Activated CD4-positive, alpha-beta memory T cell treated with anti-CD3 and anti-CD28 coated beads, Interleukin-2, amount 10 ng/mL, durations not matched to agents 7 days and 5 days (primary cell): ENCODE measurements at regions of chr2 and their contacts with region 1.

Region 1: GRCh38 chr2:38665854-38666555 is at the start of gene GALM:
- DNase-seq: peak; percentile 74
- H3K4me3 Mint-ChIP-seq: peak within 1 kb of the TSS; percentile 98
- H3K27ac Mint-ChIP-seq: peak within 1 kb of the TSS; percentile 97
- H3K4me1 Mint-ChIP-seq: peaks cover 71% of the 10 kb centered on the region
- H3K27me3 Mint-ChIP-seq: no peaks in the 10 kb centered on the region
- total RNA-seq, gene GALM: 94.7 to 97.4 TPM

Region 2: GRCh38 chr2:38344813-38345212 is 321.2 kb before region 1 on chr2:
- CTCF ChIA-PET with region 1: no interaction called
- POLR2A ChIA-PET with region 1: no interaction called
- DNase-seq: no peak
- H3K4me3 Mint-ChIP-seq: no peak overlapping the region
- H3K27ac Mint-ChIP-seq: no peak overlapping the region
- H3K4me1 Mint-ChIP-seq: no peaks in the 10 kb centered on the region
- H3K27me3 Mint-ChIP-seq: no peaks in the 10 kb centered on the region

Region 3: GRCh38 chr2:38590053-38590452 is 76.0 kb before region 1 on chr2:
- CTCF ChIA-PET with region 1: no interaction called
- POLR2A ChIA-PET with region 1: interaction called, 646 read pairs
- DNase-seq: no peak
- H3K4me3 Mint-ChIP-seq: peak overlapping the region; percentile 36
- H3K27ac Mint-ChIP-seq: peak overlapping the region; percentile 62
- H3K4me1 Mint-ChIP-seq: peaks cover 78% of the 10 kb centered on the region
- H3K27me3 Mint-ChIP-seq: no peaks in the 10 kb centered on the region

Region 4: GRCh38 chr2:38626326-38627035 is 39.5 kb before region 1 on chr2:
- CTCF ChIA-PET with region 1: interaction called, 8 read pairs
- POLR2A ChIA-PET with region 1: interaction called, 42 read pairs
- DNase-seq: peak; percentile 72
- H3K4me3 Mint-ChIP-seq: peak overlapping the region; percentile 2
- H3K27ac Mint-ChIP-seq: peak overlapping the region; percentile 69
- H3K4me1 Mint-ChIP-seq: peaks cover 36% of the 10 kb centered on the region
- H3K27me3 Mint-ChIP-seq: no peaks in the 10 kb centered on the region

Region 5: GRCh38 chr2:38648107-38648761 is 17.8 kb before region 1 on chr2:
- CTCF ChIA-PET with region 1: interaction called, 39 read pairs
- POLR2A ChIA-PET with region 1: interaction called, 268 read pairs
- DNase-seq: no peak
- H3K4me3 Mint-ChIP-seq: peak overlapping the region; percentile 1
- H3K27ac Mint-ChIP-seq: peak overlapping the region; percentile 83
- H3K4me1 Mint-ChIP-seq: peaks cover 74% of the 10 kb centered on the region
- H3K27me3 Mint-ChIP-seq: no peaks in the 10 kb centered on the region

Region 6: DNA sequence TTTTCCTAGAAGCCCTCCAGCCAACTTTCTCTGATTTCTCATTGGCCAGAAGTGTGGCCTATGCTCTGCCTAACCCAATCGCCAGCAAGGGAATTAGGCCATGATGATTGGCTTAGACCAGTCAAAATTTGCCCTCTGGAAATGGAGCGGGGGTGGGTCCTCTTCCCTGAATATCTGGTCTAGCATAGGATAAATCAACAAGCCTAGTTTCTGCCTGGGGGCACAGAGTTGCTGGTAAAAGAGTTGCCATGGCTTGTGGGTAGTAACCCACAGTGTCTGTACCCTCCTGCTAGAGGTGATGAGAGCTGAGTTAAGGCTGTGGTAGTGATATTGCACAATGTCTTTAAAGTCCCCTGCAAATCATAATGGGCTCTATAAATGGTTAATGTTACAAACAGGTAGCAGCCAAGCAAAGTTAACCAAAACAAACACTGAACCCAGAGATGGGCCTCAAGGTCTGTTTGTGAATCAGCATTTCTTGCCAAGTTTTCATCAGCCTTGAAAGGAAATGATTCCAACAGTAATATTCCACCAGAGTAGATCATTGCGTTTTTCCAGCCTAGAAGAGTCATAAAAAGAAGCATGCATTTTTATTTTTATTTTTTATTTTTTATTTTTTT is 19.2 kb after region 1 on chr2:
- CTCF ChIA-PET with region 1: interaction called, 27 read pairs
- POLR2A ChIA-PET with region 1: interaction called, 92 read pairs
- DNase-seq: no peak
- H3K4me3 Mint-ChIP-seq: no peak overlapping the region
- H3K27ac Mint-ChIP-seq: peak overlapping the region; percentile 12
- H3K4me1 Mint-ChIP-seq: peaks cover 76% of the 10 kb centered on the region
- H3K27me3 Mint-ChIP-seq: no peaks in the 10 kb centered on the region

Region 7: GRCh38 chr2:38702413-38702812 is 36.4 kb after region 1 on chr2:
- CTCF ChIA-PET with region 1: interaction called, 5 read pairs
- POLR2A ChIA-PET with region 1: interaction called, 73 read pairs
- DNase-seq: no peak
- H3K4me3 Mint-ChIP-seq: peak overlapping the region; percentile 6
- H3K27ac Mint-ChIP-seq: peak overlapping the region; percentile 52
- H3K4me1 Mint-ChIP-seq: peaks cover 69% of the 10 kb centered on the region
- H3K27me3 Mint-ChIP-seq: no peaks in the 10 kb centered on the region

Region 8: GRCh38 chr2:39243476-39244123 is 577.6 kb after region 1 on chr2 and contains the start of gene CDKL4:
- CTCF ChIA-PET with region 1: no interaction called
- POLR2A ChIA-PET with region 1: no interaction called
- DNase-seq: peak; percentile 57
- H3K4me3 Mint-ChIP-seq: peak within 1 kb of the TSS; percentile 67
- H3K27ac Mint-ChIP-seq: peak within 1 kb of the TSS; percentile 20
- H3K4me1 Mint-ChIP-seq: peaks cover 23% of the 10 kb centered on the region
- H3K27me3 Mint-ChIP-seq: peaks cover 6% of the 10 kb centered on the region
- total RNA-seq, gene CDKL4: 0.25 TPM in 1 of 2 experiments, not detected in the other